ENCODE measurements at regions of chr10 and their contacts with region 1.

Region 1: GRCh38 chr10:53135213-53135896 is 362.8 kb upstream of the MBL2 start:
- DNase-seq: no peak
- ATAC-seq: no peak
- H3K4me3 ChIP-seq: no peak overlapping the region
- H3K4me3 Mint-ChIP-seq: no peak overlapping the region
- H3K27ac ChIP-seq: no peak overlapping the region
- H3K27ac Mint-ChIP-seq: no peak overlapping the region
- H3K4me1 ChIP-seq: no peaks in the 10 kb centered on the region
- H3K4me1 Mint-ChIP-seq: no peaks in the 10 kb centered on the region
- H3K27me3 ChIP-seq: no peaks in the 10 kb centered on the region
- H3K27me3 Mint-ChIP-seq: no peaks in the 10 kb centered on the region
- CTCF ChIP-seq: no peak

Region 2: GRCh38 chr10:53071505-53072125 is 63.7 kb before region 1 on chr10:
- CTCF ChIA-PET with region 1: no interaction called
- POLR2A ChIA-PET with region 1: no interaction called
- intact Hi-C with region 1: loop called in 1 of 2 experiments (anchors 2 kb)
- DNase-seq: no peak
- ATAC-seq: no peak
- H3K4me3 ChIP-seq: no peak overlapping the region
- H3K4me3 Mint-ChIP-seq: no peak overlapping the region
- H3K27ac ChIP-seq: no peak overlapping the region
- H3K27ac Mint-ChIP-seq: no peak overlapping the region
- H3K4me1 ChIP-seq: no peaks in the 10 kb centered on the region
- H3K4me1 Mint-ChIP-seq: no peaks in the 10 kb centered on the region
- H3K27me3 ChIP-seq: no peaks in the 10 kb centered on the region
- H3K27me3 Mint-ChIP-seq: no peaks in the 10 kb centered on the region
- CTCF ChIP-seq: no peak

Measured in CD8-positive, alpha-beta T cell (primary cell).